Ascending aorta (tissue), 2 donors: ENCODE measurements at regions of chr1 and their contacts with region 1.

Region 1: DNA sequence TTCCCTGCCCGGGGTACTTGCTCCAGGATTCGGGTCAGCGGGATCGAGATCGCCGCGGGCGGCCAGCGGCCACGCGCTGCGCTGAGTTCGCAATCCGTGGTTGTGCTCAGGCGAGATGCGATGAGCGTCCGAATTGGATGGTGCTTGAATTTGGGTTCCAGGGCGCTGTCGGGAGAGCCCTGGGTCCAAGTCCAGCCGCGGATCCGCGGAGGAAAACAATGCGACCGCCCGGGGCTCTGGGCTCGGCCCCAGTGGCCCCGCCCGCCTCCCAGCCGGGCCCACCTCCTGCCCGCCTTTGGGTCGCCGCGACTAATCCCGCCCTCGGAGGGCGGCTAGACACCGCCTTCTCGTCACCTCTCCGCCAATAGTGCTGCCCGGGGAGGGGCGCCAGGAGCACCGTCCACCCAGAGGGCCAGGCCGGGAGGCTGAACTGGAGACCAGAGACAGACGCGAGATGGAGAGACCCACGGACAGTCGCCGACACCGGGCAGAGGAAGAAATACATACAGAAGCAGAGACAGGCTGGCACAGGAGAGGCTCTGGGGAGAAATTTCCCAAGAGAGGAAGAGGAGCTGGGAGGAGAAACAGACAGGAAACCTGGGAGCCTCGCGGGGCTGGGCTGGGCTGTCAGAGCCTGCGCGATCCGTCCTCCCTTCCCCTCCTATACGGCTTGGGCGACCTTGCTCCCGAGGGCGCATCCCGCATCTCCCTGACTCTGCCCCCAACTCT is at the start of gene SEMA6C:
- DNase-seq: peak; percentile 83 to 96
- H3K4me3 ChIP-seq: peak within 1 kb of the TSS; percentile 81 to 93
- H3K27ac ChIP-seq: peak within 1 kb of the TSS; percentile 72 to 82
- H3K4me1 ChIP-seq: peaks cover 0 to 16% of the 10 kb centered on the region in 2 donors
- H3K27me3 ChIP-seq: no peaks in the 10 kb centered on the region
- CTCF ChIP-seq: no peak
- total RNA-seq, gene SEMA6C: 31.8 TPM

Region 2: GRCh38 chr1:151165738-151166505 is 19.3 kb after region 1 on chr1 and contains the starts of genes LYSMD1 and SCNM1:
- intact Hi-C with region 1: loop called (anchors 2 kb)
- DNase-seq: peak; percentile 91 to 99
- H3K4me3 ChIP-seq: peak within 1 kb of the TSS; percentile 65 to 71
- H3K27ac ChIP-seq: peak within 1 kb of the TSS; percentile 77 to 86
- H3K4me1 ChIP-seq: peaks cover 10 to 23% of the 10 kb centered on the region in 2 donors
- H3K27me3 ChIP-seq: no peaks in the 10 kb centered on the region
- CTCF ChIP-seq: no peak
- total RNA-seq, gene LYSMD1: 0.85 TPM
- total RNA-seq, gene SCNM1: 27.4 TPM

Region 3: GRCh38 chr1:152699746-152700145 is 1553.2 kb after region 1 on chr1:
- intact Hi-C with region 1: no loop called
- DNase-seq: no peak
- H3K4me3 ChIP-seq: no peak overlapping the region
- H3K27ac ChIP-seq: no peak overlapping the region
- H3K4me1 ChIP-seq: no peaks in the 10 kb centered on the region
- H3K27me3 ChIP-seq: no peaks in the 10 kb centered on the region
- CTCF ChIP-seq: no peak